Activated T-helper 2 cell treated with anti-CD3 and anti-CD28 coated beads, Interferon-gamma antibody, Interleukin-2, Interleukin-4, amounts not matched to agents 10 μg/mL and 5 μg/mL and 100 μg/mL, durations not matched to agents 14 hours and 24 hours and 36 hours (primary cell): ENCODE measurements at regions of chr6 and their contacts with region 1.

Region 1: GRCh38 chr6:26156076-26156849 is 69.0 kb downstream of the HFE start:
- DNase-seq: peak; percentile 91
- H3K4me3 Mint-ChIP-seq: peak overlapping the region; percentile 90
- H3K27ac Mint-ChIP-seq: peak overlapping the region; percentile 96
- H3K4me1 Mint-ChIP-seq: peaks cover 44% of the 10 kb centered on the region
- H3K27me3 Mint-ChIP-seq: no peaks in the 10 kb centered on the region

Region 2: GRCh38 chr6:25389471-25389870 is 766.8 kb before region 1 on chr6:
- intact Hi-C with region 1: no loop called
- DNase-seq: no peak
- H3K4me3 Mint-ChIP-seq: no peak overlapping the region
- H3K27ac Mint-ChIP-seq: no peak overlapping the region
- H3K4me1 Mint-ChIP-seq: peaks cover 9% of the 10 kb centered on the region
- H3K27me3 Mint-ChIP-seq: no peaks in the 10 kb centered on the region

Region 3: DNA sequence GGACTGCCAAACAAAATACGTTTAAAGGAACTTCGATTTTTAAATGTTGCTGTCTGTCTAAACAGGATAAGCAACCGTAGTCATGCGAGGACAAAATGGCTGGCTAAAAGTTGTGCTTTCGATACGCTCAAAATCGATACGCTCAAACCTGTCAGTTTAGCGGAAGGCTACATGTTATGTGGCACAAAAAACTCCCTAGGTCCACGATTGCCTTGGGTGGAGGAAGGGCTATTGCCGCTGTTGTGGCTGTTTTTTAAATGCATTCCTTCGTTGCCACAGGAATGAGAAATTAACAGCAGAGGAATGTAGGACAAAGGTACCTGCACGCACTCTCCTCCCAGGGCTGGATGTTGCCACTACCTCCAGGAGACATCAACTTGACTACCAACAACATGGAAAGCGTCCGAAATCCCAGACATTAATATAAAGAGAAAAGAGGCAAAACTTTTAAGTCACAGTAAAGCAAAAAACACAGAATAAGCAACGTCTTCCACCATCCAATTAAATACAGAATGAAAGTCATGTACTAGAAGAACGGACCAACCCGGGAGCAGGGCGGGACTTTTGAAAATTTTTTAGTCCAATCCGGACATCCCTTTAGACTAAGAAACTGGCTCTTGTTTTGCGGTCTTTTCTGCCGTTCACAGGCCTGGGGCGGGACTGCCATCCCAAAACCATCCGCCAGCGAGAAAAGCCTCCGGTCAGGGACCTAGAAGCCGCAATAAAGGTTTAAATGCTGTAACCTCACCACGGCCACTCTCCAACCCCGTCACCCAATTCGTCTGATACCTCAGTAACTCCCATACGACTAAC is 101.2 kb before region 1 on chr6:
- intact Hi-C with region 1: loop called (anchors 1 kb)
- DNase-seq: peak; percentile 85
- H3K4me3 Mint-ChIP-seq: peak overlapping the region; percentile 90
- H3K27ac Mint-ChIP-seq: peak overlapping the region; percentile 99
- H3K4me1 Mint-ChIP-seq: peaks cover 33% of the 10 kb centered on the region
- H3K27me3 Mint-ChIP-seq: no peaks in the 10 kb centered on the region

Region 4: DNA sequence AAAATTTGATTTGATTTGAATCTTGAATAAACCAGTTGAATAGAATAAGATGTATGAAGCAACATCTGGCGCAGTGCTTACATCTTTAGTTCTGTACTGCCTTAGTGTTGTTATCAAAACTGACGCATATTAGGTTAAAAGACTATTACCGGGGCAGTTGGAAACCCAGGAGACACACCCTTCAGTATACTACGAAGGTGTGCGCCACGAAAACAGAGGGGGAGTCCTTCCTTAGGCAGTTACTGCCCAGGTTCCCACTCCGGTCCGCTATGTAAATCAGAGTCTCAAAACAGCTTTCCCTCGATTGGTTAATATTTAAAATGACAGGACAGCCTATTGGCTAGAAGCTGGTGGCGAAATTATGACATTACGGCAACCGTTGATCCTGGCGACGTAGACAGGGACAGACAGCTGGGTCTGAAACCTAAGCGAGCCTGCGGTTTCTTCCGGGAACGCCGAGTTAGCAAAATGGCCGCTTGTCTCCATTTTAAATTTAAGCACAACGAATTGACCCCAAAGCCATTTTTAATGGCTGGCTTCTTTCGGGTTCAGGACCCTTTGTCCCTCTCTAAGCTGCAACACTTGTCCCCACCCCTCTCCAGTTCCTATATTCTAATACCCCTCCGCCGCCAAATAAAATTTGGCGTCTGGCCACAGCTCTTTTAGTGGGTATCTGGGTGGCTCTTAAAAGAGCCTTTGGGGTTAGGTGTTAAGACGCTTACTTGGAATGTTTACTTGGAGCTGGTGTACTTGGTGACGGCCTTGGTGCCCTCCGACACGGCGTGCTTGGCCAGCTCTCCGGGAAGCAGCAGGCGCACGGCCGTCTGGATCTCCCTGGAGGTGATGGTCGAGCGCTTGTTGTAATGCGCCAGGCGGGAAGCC is 33.2 kb before region 1 on chr6:
- intact Hi-C with region 1: loop called (anchors 1 kb)
- DNase-seq: peak; percentile 91
- H3K4me3 Mint-ChIP-seq: peak overlapping the region; percentile 100
- H3K27ac Mint-ChIP-seq: peak overlapping the region; percentile 99
- H3K4me1 Mint-ChIP-seq: peaks cover 42% of the 10 kb centered on the region
- H3K27me3 Mint-ChIP-seq: no peaks in the 10 kb centered on the region

Region 5: GRCh38 chr6:26183581-26184366 is 27.5 kb after region 1 on chr6:
- intact Hi-C with region 1: loop called (anchors 2 kb)
- DNase-seq: peak; percentile 78
- H3K4me3 Mint-ChIP-seq: peak overlapping the region; percentile 88
- H3K27ac Mint-ChIP-seq: peak overlapping the region; percentile 96
- H3K4me1 Mint-ChIP-seq: peaks cover 69% of the 10 kb centered on the region
- H3K27me3 Mint-ChIP-seq: no peaks in the 10 kb centered on the region

Region 6: DNA sequence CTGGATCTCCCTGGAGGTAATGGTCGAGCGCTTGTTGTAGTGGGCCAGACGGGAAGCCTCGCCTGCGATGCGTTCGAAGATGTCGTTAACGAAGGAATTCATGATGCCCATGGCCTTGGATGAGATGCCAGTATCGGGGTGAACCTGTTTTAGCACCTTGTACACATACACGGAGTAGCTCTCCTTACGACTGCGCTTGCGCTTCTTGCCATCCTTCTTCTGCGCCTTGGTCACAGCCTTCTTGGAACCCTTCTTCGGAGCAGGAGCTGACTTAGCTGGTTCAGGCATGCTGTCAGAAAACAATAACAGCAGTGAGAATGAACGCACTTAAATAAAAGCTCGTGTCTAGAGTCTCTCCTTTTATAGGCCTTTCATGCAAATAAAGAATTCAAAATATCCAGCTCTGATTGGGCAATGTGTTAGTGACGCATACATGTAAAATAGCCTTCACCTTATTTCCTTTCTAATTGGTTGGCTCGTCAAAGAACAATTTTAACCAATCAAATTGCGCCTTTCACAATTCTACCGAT is 60.2 kb after region 1 on chr6:
- intact Hi-C with region 1: loop called (anchors 1 kb)
- DNase-seq: peak; percentile 87
- H3K4me3 Mint-ChIP-seq: no peak overlapping the region
- H3K27ac Mint-ChIP-seq: no peak overlapping the region
- H3K4me1 Mint-ChIP-seq: peaks cover 24% of the 10 kb centered on the region
- H3K27me3 Mint-ChIP-seq: no peaks in the 10 kb centered on the region

Region 7: DNA sequence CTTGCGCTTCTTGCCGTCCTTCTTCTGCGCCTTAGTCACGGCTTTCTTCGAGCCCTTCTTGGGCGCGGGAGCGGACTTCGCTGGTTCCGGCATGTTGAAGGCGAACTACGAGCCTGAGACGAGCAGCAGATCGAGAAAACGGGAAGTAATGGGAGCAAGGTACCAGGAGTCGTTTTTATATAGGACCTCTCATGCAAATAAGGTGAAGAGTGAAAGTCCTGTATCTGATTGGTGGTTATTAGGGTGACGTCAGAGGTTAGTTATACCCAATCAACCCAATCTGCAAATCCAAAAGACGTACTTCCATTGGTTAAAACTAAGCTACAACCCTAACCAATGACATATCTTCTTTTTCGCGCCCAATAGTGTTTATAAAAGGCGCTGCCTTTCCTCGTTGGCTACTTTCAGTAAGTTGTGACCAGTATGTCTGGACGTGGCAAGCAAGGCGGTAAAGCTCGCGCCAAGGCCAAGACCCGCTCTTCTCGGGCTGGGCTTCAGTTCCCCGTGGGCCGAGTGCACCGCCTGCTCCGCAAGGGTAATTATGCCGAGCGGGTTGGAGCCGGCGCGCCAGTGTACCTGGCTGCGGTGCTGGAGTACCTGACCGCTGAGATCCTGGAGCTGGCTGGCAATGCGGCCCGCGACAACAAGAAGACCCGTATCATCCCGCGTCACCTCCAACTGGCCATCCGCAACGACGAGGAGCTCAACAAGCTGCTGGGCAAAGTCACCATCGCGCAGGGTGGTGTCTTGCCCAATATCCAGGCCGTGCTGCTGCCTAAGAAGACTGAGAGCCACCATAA is 990.6 kb after region 1 on chr6:
- intact Hi-C with region 1: loop called (anchors 5 kb)
- DNase-seq: peak; percentile 84
- H3K4me3 Mint-ChIP-seq: no peak overlapping the region
- H3K27ac Mint-ChIP-seq: no peak overlapping the region
- H3K4me1 Mint-ChIP-seq: peaks cover 12% of the 10 kb centered on the region
- H3K27me3 Mint-ChIP-seq: no peaks in the 10 kb centered on the region